Pancreas (tissue), 10 donors: ENCODE measurements at regions of chr10 and their contacts with region 1.

Region 1: DNA sequence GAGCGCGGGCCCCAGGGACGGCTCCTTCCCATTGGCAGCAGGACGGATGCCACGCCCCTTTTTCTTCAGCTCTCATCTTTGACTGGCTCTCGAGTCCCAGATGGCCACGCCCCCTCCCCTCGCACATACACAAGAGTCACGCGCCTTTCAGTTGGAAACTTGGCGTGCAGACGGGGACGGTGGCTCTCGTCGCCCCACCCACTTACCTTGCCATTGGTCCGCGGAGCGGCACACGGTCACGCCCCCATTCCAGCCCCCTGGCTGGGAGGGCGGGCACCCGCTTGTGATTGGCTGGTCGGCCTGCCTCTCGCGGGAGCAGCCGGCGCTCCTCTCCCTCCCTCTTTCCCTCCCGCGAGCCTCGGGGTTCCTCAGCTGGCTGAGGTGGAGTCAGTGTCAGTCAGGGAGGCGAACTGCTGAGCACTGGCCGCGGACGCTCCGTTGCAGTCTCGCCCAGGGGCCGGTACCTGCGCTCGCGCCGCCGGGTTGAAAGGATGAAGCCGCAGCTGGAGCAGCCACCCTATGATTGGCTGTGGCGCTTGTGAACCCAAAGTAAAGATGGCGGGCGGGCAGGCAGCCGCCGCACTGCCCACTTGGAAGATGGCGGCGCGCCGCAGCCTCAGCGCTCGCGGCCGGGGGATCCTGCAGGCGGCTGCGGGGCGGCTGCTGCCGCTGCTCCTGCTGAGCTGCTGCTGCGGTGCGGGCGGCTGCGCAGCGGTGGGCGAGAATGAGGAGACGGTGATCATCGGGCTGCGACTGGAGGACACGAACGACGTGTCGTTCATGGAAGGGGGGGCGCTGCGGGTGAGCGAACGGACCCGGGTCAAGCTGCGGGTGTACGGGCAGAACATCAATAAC is at the start of gene CNNM2:
- DNase-seq: peak; percentile 97 to 100 (median 100)
- ATAC-seq: peak; percentile 90 to 96 (median 92)
- H3K4me3 ChIP-seq: peak within 1 kb of the TSS; percentile 66 to 97 (median 89)
- H3K27ac ChIP-seq: peak within 1 kb of the TSS; percentile 79 to 95 (median 86)
- H3K4me1 ChIP-seq: peaks cover 3 to 13% (median 12%) of the 10 kb centered on the region in 3 donors
- H3K27me3 ChIP-seq: no peaks in the 10 kb centered on the region
- CTCF ChIP-seq: no peak
- total RNA-seq, gene CNNM2: 4.4 to 8.9 (median 6.0) TPM

Region 2: GRCh38 chr10:101759309-101760247 is 1158.6 kb before region 1 on chr10:
- intact Hi-C with region 1: no loop called
- DNase-seq: no peak
- ATAC-seq: no peak
- H3K4me3 ChIP-seq: no peak overlapping the region
- H3K27ac ChIP-seq: no peak overlapping the region
- H3K4me1 ChIP-seq: no peaks in the 10 kb centered on the region
- H3K27me3 ChIP-seq: no peaks in the 10 kb centered on the region
- CTCF ChIP-seq: no peak

Region 3: GRCh38 chr10:102815790-102816549 is 102.2 kb before region 1 on chr10:
- intact Hi-C with region 1: no loop called
- DNase-seq: peak in 1 of 6 donors; percentile 44
- ATAC-seq: peak in 3 of 4 donors; percentile 37 to 67 (median 52)
- H3K4me3 ChIP-seq: no peak overlapping the region
- H3K27ac ChIP-seq: peak overlapping the region in 3 of 4 donors; percentile 26 to 73 (median 63)
- H3K4me1 ChIP-seq: peaks cover 0 to 9% (median 0%) of the 10 kb centered on the region in 3 donors
- H3K27me3 ChIP-seq: no peaks in the 10 kb centered on the region
- CTCF ChIP-seq: no peak

Region 4: GRCh38 chr10:103244663-103245271 is 326.6 kb after region 1 on chr10:
- intact Hi-C with region 1: loop called in 2 of 3 experiments (anchors 5 to 10 kb)
- DNase-seq: peak in 5 of 6 donors; percentile 62 to 82 (median 65)
- ATAC-seq: peak; percentile 76 to 88 (median 80)
- H3K4me3 ChIP-seq: no peak overlapping the region
- H3K27ac ChIP-seq: no peak overlapping the region
- H3K4me1 ChIP-seq: peaks cover 0 to 13% (median 10%) of the 10 kb centered on the region in 3 donors
- H3K27me3 ChIP-seq: no peaks in the 10 kb centered on the region
- CTCF ChIP-seq: peak; percentile 74 to 87 (median 78)